Endothelial cell of umbilical vein (primary cell): ENCODE measurements at regions of chr2 and their contacts with region 1.

Region 1: GRCh38 chr2:4556135-4556896 is 852.9 kb downstream of the DCDC2C start:
- DNase-seq: peak; percentile 61
- H3K4me3 ChIP-seq: no peak overlapping the region
- H3K27ac ChIP-seq: peak overlapping the region; percentile 69
- H3K4me1 ChIP-seq: peaks cover 15% of the 10 kb centered on the region
- H3K27me3 ChIP-seq: no peaks in the 10 kb centered on the region
- CTCF ChIP-seq: no peak
- POLR2A ChIP-seq: no peak

Region 2: DNA sequence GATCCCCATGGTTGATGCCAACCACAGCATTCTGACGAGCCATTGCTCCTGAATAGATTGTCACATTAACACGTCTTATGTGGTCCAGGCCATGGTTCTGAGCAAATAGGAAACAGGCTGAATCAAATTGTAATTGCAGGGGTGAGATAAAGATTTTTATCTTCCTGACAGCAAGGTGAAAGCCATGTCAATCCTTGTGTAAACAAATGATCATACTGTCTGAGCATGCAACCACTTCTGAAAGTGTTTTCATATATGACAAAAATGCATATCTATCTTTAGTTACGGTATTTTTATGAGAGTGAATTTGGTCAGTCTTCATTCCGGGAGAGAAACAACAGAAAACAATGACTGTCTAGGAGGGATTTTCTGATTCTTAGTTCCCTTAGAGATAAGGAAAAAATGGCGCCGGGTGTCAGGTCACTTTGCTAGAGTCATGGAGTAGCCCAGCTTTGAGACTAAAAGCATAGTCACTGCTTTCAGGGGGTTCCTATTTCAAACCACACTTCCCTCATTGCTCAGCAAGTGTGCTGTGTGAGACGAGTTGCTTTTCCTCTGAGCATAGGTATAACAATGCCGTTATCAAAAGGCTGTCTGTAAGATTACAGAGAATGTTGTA is 106.0 kb after region 1 on chr2:
- CTCF ChIA-PET with region 1: no interaction called
- POLR2A ChIA-PET with region 1: no interaction called
- dilution Hi-C with region 1: no loop called
- intact Hi-C with region 1: loop called (anchors 5 kb)
- DNase-seq: peak; percentile 88
- H3K4me3 ChIP-seq: no peak overlapping the region
- H3K27ac ChIP-seq: peak overlapping the region; percentile 91
- H3K4me1 ChIP-seq: peaks cover 18% of the 10 kb centered on the region
- H3K27me3 ChIP-seq: no peaks in the 10 kb centered on the region
- CTCF ChIP-seq: no peak
- POLR2A ChIP-seq: no peak